ENCODE measurements at regions of chr9 and their contacts with region 1.

Region 1: DNA sequence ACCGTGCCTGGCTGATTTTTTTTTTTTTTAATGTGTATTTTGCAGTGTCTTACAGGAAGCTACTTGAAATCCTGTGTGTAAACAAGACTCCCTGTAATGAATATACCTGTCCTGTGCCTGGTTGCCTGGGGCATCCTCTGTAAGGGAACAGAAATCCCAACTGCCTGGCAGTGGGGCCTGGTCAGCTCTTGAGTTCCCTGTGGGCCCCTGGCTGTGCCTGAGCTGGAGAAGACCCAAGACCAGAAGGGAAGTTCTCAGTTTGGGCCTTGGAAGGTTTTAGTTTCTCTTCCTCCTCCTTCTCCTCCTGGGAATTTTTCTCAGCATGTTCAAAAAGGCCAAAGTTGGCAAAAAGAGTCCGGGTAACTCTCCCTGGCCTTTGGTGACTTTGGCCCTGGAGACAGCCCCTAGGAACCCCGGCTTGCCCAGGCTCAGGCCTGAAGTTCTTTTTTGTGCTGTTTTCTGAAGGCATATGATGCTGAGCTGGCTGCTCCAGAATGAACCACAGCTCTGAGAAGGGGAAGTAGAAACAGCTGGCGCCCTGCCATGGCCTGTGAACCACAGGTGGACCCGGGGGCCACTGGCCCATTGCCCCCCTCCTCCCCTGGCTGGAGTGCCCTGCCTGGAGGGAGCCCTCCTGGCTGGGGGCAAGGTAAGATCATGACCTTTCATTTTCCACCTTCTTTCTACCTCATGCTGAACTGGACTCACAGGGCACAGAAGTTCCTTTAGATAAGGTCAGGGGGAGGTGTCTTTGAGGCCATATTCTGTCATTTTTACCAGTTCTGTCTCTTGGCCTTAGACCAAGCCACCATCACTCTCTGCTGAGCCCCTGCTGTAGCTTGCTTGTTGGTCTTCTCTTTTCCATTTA is 5.8 kb downstream of the TMEM268 start:
- DNase-seq: peak; percentile 83
- H3K4me3 ChIP-seq: no peak overlapping the region
- H3K27ac ChIP-seq: peak overlapping the region; percentile 42 to 70 (median 63)
- H3K4me1 ChIP-seq: peaks cover 16 to 43% (median 23%) of the 10 kb centered on the region in 4 donors
- H3K27me3 ChIP-seq: no peaks in the 10 kb centered on the region
- CTCF ChIP-seq: no peak
- EP300 ChIP-seq: no peak
- POLR2A ChIP-seq: no peak

Region 2: GRCh38 chr9:114641967-114642366 is 25.1 kb after region 1 on chr9:
- in situ Hi-C with region 1: no loop called
- intact Hi-C with region 1: loop called (anchors 1 kb)
- DNase-seq: no peak
- H3K4me3 ChIP-seq: no peak overlapping the region
- H3K27ac ChIP-seq: no peak overlapping the region
- H3K4me1 ChIP-seq: no peaks in the 10 kb centered on the region
- H3K27me3 ChIP-seq: no peaks in the 10 kb centered on the region
- CTCF ChIP-seq: no peak
- EP300 ChIP-seq: no peak
- POLR2A ChIP-seq: no peak